ENCODE measurements at regions of chr6 and their contacts with region 1.

Region 1: GRCh38 chr6:25017932-25018567 is 82.3 kb upstream of the RIPOR2 start:
- DNase-seq: peak; percentile 88
- H3K4me3 Mint-ChIP-seq: no peak overlapping the region
- H3K27ac Mint-ChIP-seq: peak overlapping the region; percentile 46
- H3K4me1 Mint-ChIP-seq: peaks cover 45% of the 10 kb centered on the region
- H3K27me3 Mint-ChIP-seq: no peaks in the 10 kb centered on the region

Region 2: DNA sequence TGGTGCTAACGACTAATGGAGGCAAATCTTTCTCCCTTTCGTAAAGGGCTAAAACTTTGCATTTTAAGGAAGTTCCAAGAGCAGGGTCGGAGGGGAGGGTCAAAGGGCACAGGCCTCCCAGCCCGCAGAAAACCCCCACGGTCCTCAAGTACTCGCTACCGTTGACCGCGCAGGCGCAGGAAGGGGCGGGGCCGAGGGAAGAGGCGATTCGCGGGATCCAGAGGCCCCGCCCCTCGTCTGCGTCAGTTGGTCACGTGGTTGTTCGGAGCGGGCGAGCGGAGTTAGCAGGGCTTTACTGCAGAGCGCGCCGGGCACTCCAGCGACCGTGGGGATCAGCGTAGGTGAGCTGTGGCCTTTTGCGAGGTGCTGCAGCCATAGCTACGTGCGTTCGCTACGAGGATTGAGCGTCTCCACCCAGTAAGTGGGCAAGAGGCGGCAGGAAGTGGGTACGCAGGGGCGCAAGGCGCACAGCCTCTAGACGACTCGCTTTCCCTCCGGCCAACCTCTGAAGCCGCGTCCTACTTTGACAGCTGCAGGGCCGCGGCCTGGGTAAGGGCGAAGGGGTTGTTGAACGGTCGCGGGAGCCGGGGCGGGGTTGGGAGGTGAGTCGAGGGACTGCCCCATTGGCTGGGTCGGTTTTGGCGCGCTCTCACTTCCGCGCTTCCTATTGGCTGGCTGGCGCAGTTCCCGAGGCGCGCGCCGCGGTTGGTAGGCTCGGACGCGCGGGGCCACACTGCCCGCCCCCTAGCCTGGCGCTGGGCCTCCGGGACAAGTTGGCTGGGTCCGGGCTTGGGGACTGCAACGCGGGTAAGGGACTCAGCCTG is 243.1 kb before region 1 on chr6 and contains the start of gene GMNN:
- CTCF ChIA-PET with region 1: interaction called, 11 read pairs
- POLR2A ChIA-PET with region 1: interaction called, 5 read pairs
- DNase-seq: peak; percentile 98
- H3K4me3 Mint-ChIP-seq: peak within 1 kb of the TSS; percentile 95
- H3K27ac Mint-ChIP-seq: peak within 1 kb of the TSS; percentile 98
- H3K4me1 Mint-ChIP-seq: peaks cover 32% of the 10 kb centered on the region
- H3K27me3 Mint-ChIP-seq: no peaks in the 10 kb centered on the region
- total RNA-seq, gene GMNN: 67.6 to 69.0 TPM

Region 3: GRCh38 chr6:24855395-24856245 is 162.4 kb before region 1 on chr6:
- CTCF ChIA-PET with region 1: interaction called, 153 read pairs
- POLR2A ChIA-PET with region 1: interaction called, 59 read pairs
- DNase-seq: peak; percentile 75
- H3K4me3 Mint-ChIP-seq: no peak overlapping the region
- H3K27ac Mint-ChIP-seq: peak overlapping the region; percentile 90
- H3K4me1 Mint-ChIP-seq: peaks cover 55% of the 10 kb centered on the region
- H3K27me3 Mint-ChIP-seq: no peaks in the 10 kb centered on the region

Region 4: GRCh38 chr6:24910961-24911712 is 106.9 kb before region 1 on chr6:
- CTCF ChIA-PET with region 1: interaction called, 29 read pairs
- POLR2A ChIA-PET with region 1: interaction called, 18 read pairs
- DNase-seq: peak; percentile 46
- H3K4me3 Mint-ChIP-seq: peak overlapping the region; percentile 76
- H3K27ac Mint-ChIP-seq: peak overlapping the region; percentile 79
- H3K4me1 Mint-ChIP-seq: peaks cover 90% of the 10 kb centered on the region
- H3K27me3 Mint-ChIP-seq: no peaks in the 10 kb centered on the region

Region 5: GRCh38 chr6:25006565-25007001 is 11.5 kb before region 1 on chr6:
- CTCF ChIA-PET with region 1: interaction called, 48 read pairs
- POLR2A ChIA-PET with region 1: interaction called, 21 read pairs
- DNase-seq: peak; percentile 75
- H3K4me3 Mint-ChIP-seq: peak overlapping the region; percentile 50
- H3K27ac Mint-ChIP-seq: peak overlapping the region; percentile 92
- H3K4me1 Mint-ChIP-seq: peaks cover 79% of the 10 kb centered on the region
- H3K27me3 Mint-ChIP-seq: no peaks in the 10 kb centered on the region

Region 6: GRCh38 chr6:25061289-25061936 is 43.4 kb after region 1 on chr6:
- CTCF ChIA-PET with region 1: interaction called, 11 read pairs
- POLR2A ChIA-PET with region 1: interaction called, 4 read pairs
- DNase-seq: no peak
- H3K4me3 Mint-ChIP-seq: no peak overlapping the region
- H3K27ac Mint-ChIP-seq: no peak overlapping the region
- H3K4me1 Mint-ChIP-seq: peaks cover 24% of the 10 kb centered on the region
- H3K27me3 Mint-ChIP-seq: no peaks in the 10 kb centered on the region

Region 7: GRCh38 chr6:25389471-25389870 is 371.4 kb after region 1 on chr6:
- CTCF ChIA-PET with region 1: no interaction called
- POLR2A ChIA-PET with region 1: no interaction called
- DNase-seq: no peak
- H3K4me3 Mint-ChIP-seq: no peak overlapping the region
- H3K27ac Mint-ChIP-seq: no peak overlapping the region
- H3K4me1 Mint-ChIP-seq: peaks cover 9% of the 10 kb centered on the region
- H3K27me3 Mint-ChIP-seq: no peaks in the 10 kb centered on the region